Esophagus muscularis mucosa (tissue), 4 donors: ENCODE measurements at regions of chr17 and their contacts with region 1.

Region 1: GRCh38 chr17:43338886-43339516 is 59.8 kb upstream of the ARL4D start:
- DNase-seq: no peak
- H3K4me3 ChIP-seq: no peak overlapping the region
- H3K27ac ChIP-seq: no peak overlapping the region
- H3K4me1 ChIP-seq: peaks cover 16 to 26% (median 23%) of the 10 kb centered on the region in 4 donors
- H3K27me3 ChIP-seq: no peaks in the 10 kb centered on the region
- CTCF ChIP-seq: peak; percentile 67 to 81 (median 81)
- EP300 ChIP-seq: no peak
- POLR2A ChIP-seq: no peak

Region 2: GRCh38 chr17:43211480-43212402 is 127.3 kb before region 1 on chr17 and contains the start of gene TMEM106A:
- intact Hi-C with region 1: loop called (anchors 5 kb)
- DNase-seq: peak; percentile 96
- H3K4me3 ChIP-seq: peak within 1 kb of the TSS; percentile 59 to 74 (median 65)
- H3K27ac ChIP-seq: peak within 1 kb of the TSS; percentile 79 to 84 (median 80)
- H3K4me1 ChIP-seq: peaks cover 12 to 28% (median 26%) of the 10 kb centered on the region in 4 donors
- H3K27me3 ChIP-seq: no peaks in the 10 kb centered on the region
- CTCF ChIP-seq: peak in 2 of 3 experiments; percentile 34 to 39
- EP300 ChIP-seq: no peak
- POLR2A ChIP-seq: no peak
- total RNA-seq, gene TMEM106A: 3.3 to 6.2 (median 3.7) TPM

Region 3: GRCh38 chr17:43324205-43324893 is 14.7 kb before region 1 on chr17:
- intact Hi-C with region 1: no loop called
- DNase-seq: no peak
- H3K4me3 ChIP-seq: no peak overlapping the region
- H3K27ac ChIP-seq: no peak overlapping the region
- H3K4me1 ChIP-seq: no peaks in the 10 kb centered on the region
- H3K27me3 ChIP-seq: no peaks in the 10 kb centered on the region
- CTCF ChIP-seq: peak in 1 of 3 experiments; percentile 20
- EP300 ChIP-seq: no peak
- POLR2A ChIP-seq: no peak